ENCODE measurements at regions of chr17 and their contacts with region 1.

Region 1: DNA sequence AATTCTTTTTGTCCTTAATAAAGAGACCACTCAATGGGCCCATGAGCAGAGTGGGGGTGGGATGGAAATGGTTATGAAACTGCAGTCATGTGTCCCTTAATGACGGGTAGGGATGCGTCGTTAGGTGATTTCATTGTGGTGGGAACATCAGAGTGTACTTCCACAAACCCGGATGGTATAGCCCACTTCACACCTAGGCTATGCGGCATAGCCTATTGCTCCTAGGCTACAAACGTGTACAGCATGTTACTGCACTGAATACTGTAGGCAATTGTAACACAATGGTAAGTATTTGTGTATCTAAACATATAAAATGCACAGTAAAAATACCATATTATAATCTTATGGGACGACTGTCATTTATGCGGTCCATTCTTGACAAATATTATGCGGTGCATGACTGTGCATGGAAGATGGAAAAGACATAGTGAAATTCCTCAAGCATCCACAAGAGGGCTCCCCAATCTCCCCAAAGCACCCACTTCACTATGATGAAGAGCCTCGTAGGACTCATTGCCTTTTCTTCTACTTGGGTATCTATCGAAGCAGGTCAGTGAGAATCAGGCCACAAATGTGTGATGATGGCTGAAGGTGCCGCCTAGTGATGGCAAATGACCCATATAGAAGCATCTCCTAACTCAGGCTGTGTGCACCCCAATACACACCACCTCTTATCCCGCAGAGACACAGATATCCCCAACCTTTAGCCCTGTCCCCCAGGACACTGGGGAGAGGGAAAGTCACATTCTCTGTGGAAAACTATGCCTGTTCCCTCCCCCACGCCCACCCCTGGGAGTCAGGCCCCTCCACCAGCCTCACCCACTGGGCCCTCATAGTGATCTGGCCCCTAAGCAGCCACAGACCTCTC is 43.5 kb downstream of the TBX21 start:
- DNase-seq: peak; percentile 67
- H3K4me3 Mint-ChIP-seq: no peak overlapping the region
- H3K27ac Mint-ChIP-seq: no peak overlapping the region
- H3K4me1 Mint-ChIP-seq: no peaks in the 10 kb centered on the region
- H3K27me3 Mint-ChIP-seq: peaks cover 77% of the 10 kb centered on the region
- CTCF ChIP-seq: peak; percentile 89

Region 2: DNA sequence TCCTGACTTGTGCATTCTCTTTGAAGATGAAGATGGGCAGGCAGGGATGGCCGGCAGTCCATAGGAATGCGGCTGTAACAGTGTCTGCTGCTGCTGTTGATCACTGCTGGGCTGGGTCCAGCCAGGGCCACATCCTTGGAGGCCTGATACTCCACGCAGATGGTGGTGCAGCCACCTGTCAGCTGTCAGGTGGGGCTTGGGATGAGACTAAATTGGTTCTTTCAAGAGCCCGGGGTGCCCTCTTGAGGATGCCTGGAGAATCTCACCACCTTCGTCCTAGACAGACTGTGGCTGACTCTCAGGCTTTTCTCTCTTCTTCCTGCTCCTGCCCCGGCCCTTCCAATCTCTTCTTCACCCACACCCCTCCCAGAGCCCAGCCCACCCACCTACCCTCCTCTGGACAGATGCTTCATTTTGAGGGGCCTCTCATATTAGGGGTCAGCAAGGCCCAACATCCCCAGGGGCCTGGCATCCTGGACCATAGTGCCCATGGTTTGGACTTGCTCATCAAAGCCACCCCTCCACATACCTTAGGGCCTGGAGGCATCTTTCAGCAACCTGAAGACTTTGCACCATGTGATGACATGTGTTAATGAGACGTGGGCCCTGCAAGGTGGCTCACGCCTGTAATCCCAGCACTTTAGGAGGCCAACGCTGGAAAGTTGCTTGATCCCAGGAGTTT is 25.9 kb after region 1 on chr17:
- CTCF ChIA-PET with region 1: interaction called, 3 read pairs
- intact Hi-C with region 1: loop called (anchors 1 kb)
- DNase-seq: peak; percentile 83
- H3K4me3 Mint-ChIP-seq: no peak overlapping the region
- H3K27ac Mint-ChIP-seq: no peak overlapping the region
- H3K4me1 Mint-ChIP-seq: no peaks in the 10 kb centered on the region
- H3K27me3 Mint-ChIP-seq: peaks cover 53% of the 10 kb centered on the region
- CTCF ChIP-seq: peak; percentile 75

Region 3: DNA sequence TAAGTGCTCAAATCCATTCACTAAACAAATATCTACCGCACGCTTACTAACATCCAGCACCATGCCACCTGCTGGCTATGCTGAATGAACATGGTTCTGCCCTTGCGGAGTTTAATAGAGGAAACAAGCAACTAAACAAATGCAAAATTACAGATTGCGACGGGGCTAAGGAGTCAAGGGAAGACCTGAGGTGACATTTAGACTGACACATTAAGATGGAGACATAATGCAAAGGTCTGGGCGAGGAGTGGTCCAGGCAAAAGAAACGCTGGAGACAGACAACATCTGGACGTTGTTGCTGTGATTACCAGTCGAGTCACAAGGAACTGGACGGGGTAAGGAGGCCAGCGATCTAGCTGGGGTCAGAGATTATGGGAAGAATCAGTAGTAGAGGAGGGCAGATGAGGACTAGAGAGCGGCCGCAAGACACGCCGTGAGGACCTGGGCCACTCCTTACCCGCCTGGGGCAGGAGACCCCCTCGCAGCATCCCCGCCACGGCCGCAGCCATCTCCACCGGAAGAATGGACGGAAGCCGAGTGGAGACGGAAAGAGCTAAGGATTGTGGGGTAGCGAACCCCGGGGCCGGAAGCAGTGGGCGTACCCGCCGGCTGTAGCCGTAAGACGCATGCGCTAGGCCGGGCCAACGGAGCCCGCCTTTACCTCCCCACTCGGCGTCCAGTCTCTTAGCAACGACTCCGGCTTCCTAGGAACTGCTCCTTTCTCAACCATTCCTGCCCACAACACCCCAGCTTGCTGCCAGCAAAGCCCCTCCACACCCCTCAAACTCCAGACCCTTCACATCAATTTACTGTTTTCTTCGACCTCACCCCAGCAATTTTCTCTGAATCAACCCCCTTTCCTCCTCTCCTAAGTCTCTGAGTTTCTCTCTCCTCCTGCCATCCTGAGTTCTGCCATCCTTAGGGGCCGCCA is 54.7 kb after region 1 on chr17 and contains the starts of genes LRRC46 and MRPL10:
- CTCF ChIA-PET with region 1: interaction called, 5 read pairs
- intact Hi-C with region 1: loop called (anchors 1 kb)
- DNase-seq: peak; percentile 98
- H3K4me3 Mint-ChIP-seq: peak within 1 kb of the TSS; percentile 95
- H3K27ac Mint-ChIP-seq: peak within 1 kb of the TSS; percentile 89
- H3K4me1 Mint-ChIP-seq: peaks cover 9% of the 10 kb centered on the region
- H3K27me3 Mint-ChIP-seq: no peaks in the 10 kb centered on the region
- CTCF ChIP-seq: peak; percentile 43
- total RNA-seq, gene LRRC46: 2.9 and 4.0 TPM in 2 replicates
- total RNA-seq, gene MRPL10: 70.2 and 84.1 TPM in 2 replicates

Region 4: DNA sequence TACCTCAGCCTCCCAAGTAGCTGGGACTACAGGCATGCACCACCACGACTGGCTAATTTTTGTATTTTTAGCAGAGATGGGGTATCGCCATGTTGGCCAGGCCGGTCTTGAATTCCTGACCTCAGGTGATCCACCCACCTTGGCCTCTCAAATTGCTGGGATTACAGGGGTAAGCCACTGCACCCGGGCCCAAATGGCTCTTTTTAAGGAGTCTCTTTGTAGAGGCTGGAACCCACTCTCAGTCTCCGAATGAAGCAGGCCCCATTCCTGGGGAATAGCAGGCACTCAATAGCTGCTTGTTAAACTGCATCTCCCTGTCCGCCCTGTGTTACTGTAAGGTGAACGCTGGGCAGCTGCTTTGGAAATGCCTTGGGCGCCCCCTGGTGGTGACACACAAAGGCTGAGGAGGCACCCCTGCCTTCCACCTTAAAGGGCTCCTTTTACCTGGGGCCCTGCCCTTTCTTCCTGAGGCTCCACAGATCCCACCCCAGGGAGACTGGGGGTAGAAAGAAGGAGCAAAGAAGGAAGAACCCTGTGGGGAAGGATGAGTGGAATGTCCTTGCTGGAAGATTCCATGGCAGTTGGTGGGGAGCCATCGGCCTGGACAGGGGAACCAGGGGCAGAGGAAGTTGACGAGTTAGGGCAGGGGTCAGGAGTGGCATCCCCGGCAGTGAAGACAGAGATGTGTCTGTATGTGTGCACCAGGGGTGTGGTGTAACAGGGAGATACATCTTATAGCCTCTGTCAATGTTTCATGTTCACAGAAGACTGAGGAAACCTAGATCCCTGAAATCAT is 113.4 kb after region 1 on chr17:
- CTCF ChIA-PET with region 1: no interaction called
- intact Hi-C with region 1: loop called (anchors 2 kb)
- DNase-seq: peak; percentile 98
- H3K4me3 Mint-ChIP-seq: no peak overlapping the region
- H3K27ac Mint-ChIP-seq: no peak overlapping the region
- H3K4me1 Mint-ChIP-seq: peaks cover 15% of the 10 kb centered on the region
- H3K27me3 Mint-ChIP-seq: peaks cover 4% of the 10 kb centered on the region
- CTCF ChIP-seq: peak; percentile 99

Region 5: DNA sequence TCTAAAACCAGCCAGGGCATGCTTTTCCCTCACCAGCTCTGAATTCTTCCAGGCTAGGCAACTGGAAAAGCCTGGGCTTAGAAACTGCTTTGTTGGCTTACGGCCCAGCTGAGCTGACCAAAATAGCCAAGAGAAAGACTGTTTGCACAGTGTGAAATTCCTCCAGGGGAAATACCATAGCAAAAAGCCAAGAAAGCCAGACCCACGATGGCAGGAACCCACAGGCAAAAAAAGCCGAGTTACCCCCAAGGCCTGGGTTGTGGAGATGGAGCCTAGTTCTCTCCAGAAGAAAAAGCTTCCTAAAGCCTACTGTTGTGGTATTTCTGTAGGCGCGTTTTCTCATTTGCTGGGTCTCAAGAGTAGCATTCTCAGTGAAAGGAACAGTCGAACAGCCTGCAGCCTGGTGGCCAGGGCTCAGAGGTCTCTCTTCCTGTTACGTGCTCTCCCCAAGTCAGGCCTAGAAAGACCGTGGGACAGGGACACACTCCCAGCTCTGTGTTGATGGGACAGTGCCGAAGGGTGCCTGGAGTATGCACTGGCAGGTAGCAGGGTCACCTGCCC is 128.7 kb after region 1 on chr17:
- CTCF ChIA-PET with region 1: no interaction called
- intact Hi-C with region 1: no loop called
- DNase-seq: no peak
- H3K4me3 Mint-ChIP-seq: no peak overlapping the region
- H3K27ac Mint-ChIP-seq: no peak overlapping the region
- H3K4me1 Mint-ChIP-seq: no peaks in the 10 kb centered on the region
- H3K27me3 Mint-ChIP-seq: no peaks in the 10 kb centered on the region
- CTCF ChIP-seq: no peak

Measured in Calu3 (cell line).